ENCODE measurements at regions of chr16 and their contacts with region 1.

Region 1: GRCh38 chr16:84396537-84397008 is 28.2 kb downstream of the ATP2C2 start:
- DNase-seq: peak; percentile 79 to 84
- H3K4me3 ChIP-seq: no peak overlapping the region
- H3K4me3 Mint-ChIP-seq: peak overlapping the region; percentile 71
- H3K27ac Mint-ChIP-seq: peak overlapping the region; percentile 94
- H3K4me1 ChIP-seq: peaks cover 28% of the 10 kb centered on the region
- H3K4me1 Mint-ChIP-seq: peaks cover 23% of the 10 kb centered on the region
- H3K27me3 ChIP-seq: no peaks in the 10 kb centered on the region
- H3K27me3 Mint-ChIP-seq: no peaks in the 10 kb centered on the region
- CTCF ChIP-seq: no peak

Region 2: DNA sequence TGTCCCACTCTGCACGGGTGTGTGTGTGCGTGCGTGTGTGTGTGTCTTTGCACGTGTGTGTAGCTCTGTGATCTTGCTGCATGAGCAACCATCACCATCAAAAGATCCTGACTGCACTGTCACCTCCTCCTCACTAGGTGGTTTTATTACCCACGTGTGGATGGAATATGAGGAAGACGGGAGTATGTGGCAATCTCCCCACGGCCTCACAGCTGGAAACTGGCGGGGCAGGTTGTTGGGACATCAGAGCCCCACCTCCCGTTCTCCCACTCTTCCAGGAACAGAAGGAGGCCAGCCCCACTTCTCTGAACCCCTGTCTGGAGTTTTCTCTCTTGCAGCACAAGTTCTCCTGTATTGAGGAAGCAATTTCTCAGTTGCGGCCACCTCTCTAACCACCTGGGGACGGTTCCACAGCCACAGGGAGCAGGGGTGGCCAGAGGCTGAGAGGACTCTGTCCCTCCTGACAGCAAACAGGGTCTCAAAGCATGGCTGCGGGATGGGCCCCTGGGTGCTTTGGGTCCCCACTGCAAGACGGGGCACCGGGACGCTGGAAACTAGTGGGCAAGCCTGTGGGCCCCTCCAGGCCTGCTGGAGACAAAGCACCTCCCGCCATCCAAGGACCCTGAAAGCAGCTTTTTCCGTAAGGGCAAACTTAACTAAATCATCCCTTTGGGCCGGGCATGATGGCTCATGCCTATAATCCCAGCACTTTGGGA is 56.1 kb before region 1 on chr16:
- CTCF ChIA-PET with region 1: no interaction called
- POLR2A ChIA-PET with region 1: no interaction called
- intact Hi-C with region 1: loop called (anchors 1 kb)
- DNase-seq: peak; percentile 89 to 91
- H3K4me3 ChIP-seq: no peak overlapping the region
- H3K4me3 Mint-ChIP-seq: no peak overlapping the region
- H3K27ac Mint-ChIP-seq: no peak overlapping the region
- H3K4me1 ChIP-seq: peaks cover 8% of the 10 kb centered on the region
- H3K4me1 Mint-ChIP-seq: peaks cover 9% of the 10 kb centered on the region
- H3K27me3 ChIP-seq: no peaks in the 10 kb centered on the region
- H3K27me3 Mint-ChIP-seq: no peaks in the 10 kb centered on the region
- CTCF ChIP-seq: peak; percentile 49 to 70

Region 3: GRCh38 chr16:84368308-84368996 is 28.1 kb before region 1 on chr16 and contains the start of gene ATP2C2:
- CTCF ChIA-PET with region 1: no interaction called
- POLR2A ChIA-PET with region 1: interaction called, 3 read pairs
- intact Hi-C with region 1: loop called (anchors 1 kb)
- DNase-seq: peak; percentile 89 to 95
- H3K4me3 ChIP-seq: peak within 1 kb of the TSS; percentile 65
- H3K4me3 Mint-ChIP-seq: peak within 1 kb of the TSS; percentile 93
- H3K27ac Mint-ChIP-seq: peak within 1 kb of the TSS; percentile 93
- H3K4me1 ChIP-seq: peaks cover 15% of the 10 kb centered on the region
- H3K4me1 Mint-ChIP-seq: peaks cover 16% of the 10 kb centered on the region
- H3K27me3 ChIP-seq: no peaks in the 10 kb centered on the region
- H3K27me3 Mint-ChIP-seq: no peaks in the 10 kb centered on the region
- CTCF ChIP-seq: no peak
- total RNA-seq, gene ATP2C2: 45.7 and 47.0 TPM in 2 replicates

Region 4: GRCh38 chr16:84475618-84476340 is 79.2 kb after region 1 on chr16:
- CTCF ChIA-PET with region 1: no interaction called
- POLR2A ChIA-PET with region 1: interaction called, 3 read pairs
- intact Hi-C with region 1: loop called (anchors 1 kb)
- DNase-seq: peak; percentile 70 to 77
- H3K4me3 ChIP-seq: no peak overlapping the region
- H3K4me3 Mint-ChIP-seq: no peak overlapping the region
- H3K27ac Mint-ChIP-seq: peak overlapping the region; percentile 8
- H3K4me1 ChIP-seq: peaks cover 9% of the 10 kb centered on the region
- H3K4me1 Mint-ChIP-seq: peaks cover 12% of the 10 kb centered on the region
- H3K27me3 ChIP-seq: no peaks in the 10 kb centered on the region
- H3K27me3 Mint-ChIP-seq: no peaks in the 10 kb centered on the region
- CTCF ChIP-seq: no peak